Right ventricle myocardium superior (tissue), 1 donor: ENCODE measurements at regions of chr3 and their contacts with region 1.

Region 1: DNA sequence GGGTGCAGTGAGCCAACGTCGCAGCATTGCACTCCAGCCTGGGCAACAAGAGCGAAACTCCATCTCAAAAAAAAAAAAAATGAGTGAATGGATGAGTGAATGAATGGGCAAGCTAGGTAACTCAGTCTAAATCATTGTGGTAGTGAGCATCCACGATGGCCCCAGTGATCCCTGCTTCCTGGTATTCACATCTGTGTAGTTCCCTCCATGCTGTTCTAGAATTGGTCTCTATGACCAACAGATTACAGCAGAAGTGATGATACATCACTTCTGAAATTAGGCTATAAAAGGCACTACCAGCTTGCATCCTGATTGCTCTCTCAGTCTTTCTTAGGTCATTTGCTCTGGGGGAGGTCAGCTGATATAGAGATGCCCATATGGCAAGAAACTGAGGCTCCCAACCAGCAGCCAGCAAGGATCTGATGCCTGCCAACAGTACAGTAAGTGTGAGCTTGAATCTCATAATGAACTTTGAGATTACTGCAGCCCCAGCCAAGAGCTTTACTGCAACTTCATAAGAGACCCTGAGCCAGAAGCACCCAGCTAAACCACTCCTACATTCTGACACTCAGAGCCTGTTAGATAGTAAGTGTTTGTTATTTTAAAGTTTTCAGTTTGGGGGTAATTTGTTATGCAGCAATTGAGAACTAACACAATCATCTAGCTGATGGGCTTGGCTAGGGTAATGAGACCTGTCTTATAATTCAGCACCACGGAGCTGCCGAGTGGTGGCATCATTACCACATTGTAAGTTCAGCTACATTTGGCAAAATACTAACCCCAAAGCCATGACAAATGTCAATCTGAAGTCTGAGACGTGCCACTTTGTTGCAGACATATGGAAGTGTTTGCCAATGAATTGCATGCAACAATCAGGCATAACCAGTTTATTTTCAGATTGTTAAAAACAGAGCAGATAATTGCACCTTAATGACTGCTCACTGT is 53.0 kb downstream of the KLHL6 start:
- DNase-seq: peak; percentile 52
- ATAC-seq: peak; percentile 91

Region 2: DNA sequence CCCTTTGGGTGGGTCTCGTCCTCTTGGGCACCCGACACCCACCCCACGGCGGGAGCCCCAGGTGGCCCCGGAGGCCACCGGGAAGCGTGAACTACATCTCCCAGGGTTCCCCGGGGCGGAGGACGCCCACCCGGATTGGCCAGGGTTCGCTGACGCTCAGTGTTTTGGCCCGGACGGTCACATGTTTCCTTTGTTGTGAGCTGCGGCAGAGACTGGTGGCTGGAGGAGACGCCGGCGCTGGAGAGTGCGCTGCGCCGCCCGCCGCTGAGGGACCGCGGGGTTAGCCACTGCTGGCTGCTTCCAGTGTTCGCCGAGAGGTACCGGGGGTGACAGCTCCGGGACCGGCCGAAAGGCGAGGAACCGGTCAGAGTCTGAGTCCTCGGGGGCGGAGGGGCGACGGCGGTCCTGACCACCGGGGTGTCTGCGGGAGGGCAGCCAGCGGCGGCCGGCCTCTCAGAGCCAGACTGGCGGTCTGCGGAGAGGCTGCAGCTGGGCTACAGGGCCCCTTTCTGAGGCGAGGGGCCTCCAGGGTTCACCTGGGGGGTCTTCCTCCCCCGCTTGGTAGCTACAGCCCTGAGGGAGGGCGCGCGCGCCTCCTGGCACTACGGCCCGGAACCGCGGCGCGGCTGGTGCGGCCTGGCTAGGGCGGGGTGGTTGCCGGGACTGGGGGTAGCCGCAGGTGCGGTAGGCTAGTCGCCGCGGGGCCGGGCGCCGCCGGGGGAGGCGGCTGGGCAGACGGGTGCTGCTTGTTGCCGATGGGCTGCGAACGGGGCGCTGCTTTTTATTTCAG is 133.1 kb after region 1 on chr3 and contains the start of gene KLHL24:
- intact Hi-C with region 1: loop called (anchors 10 kb)
- DNase-seq: peak; percentile 95
- ATAC-seq: peak; percentile 89
- total RNA-seq, gene KLHL24: 249 TPM

Region 3: GRCh38 chr3:183766745-183767606 is 264.5 kb after region 1 on chr3:
- intact Hi-C with region 1: loop called (anchors 2 kb)
- DNase-seq: peak; percentile 59
- ATAC-seq: peak; percentile 91